Activated CD4-positive, alpha-beta T cell treated with anti-CD3 and anti-CD28 coated beads, Interleukin-2, amount 10 ng/mL, durations not matched to agents 7 days and 5 days (primary cell): ENCODE measurements at regions of chr14 and their contacts with region 1.

Region 1: GRCh38 chr14:106681568-106681967 is 1155.2 kb downstream of the TMEM121 start:
- DNase-seq: no peak
- H3K4me3 Mint-ChIP-seq: no peak overlapping the region
- H3K27ac Mint-ChIP-seq: no peak overlapping the region
- H3K4me1 Mint-ChIP-seq: no peaks in the 10 kb centered on the region
- H3K27me3 Mint-ChIP-seq: peaks cover 53% of the 10 kb centered on the region

Region 2: DNA sequence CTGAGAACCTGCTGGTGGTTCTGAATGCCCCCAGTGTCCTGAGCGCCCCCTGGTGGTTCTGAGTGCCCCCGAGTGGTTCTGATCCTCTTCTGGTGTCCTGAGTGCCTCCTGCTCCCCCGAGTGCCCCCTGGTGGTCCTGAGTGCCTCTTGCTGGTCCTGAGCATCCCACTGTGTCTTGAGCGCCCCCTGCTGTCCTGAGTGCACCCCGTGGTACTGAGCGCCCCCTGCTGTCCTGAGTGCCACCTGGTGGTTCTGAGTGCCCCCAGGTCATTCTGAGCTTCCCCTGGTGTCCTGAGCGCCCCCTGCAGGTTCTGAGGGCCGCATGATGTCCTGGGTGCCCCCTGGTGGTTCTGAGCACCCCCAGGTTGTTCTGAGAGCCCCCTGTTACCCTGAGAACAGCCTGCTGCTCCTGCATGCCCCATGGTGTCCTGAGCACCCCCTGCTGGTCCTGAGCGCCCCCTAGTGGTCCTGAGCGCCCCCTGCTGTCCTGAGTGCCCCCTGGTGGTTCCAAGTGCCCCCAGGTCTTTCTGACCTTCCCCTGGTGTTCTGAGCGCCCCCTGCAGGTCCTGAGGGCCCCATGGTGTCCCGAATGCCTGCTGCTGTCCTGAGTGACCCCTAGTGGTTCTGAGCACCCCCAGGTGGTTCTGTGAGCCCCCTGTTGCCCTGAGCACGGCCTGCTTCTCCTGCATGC is 10.2 kb after region 1 on chr14:
- CTCF ChIA-PET with region 1: interaction called, 22 read pairs
- POLR2A ChIA-PET with region 1: no interaction called
- DNase-seq: peak; percentile 62
- H3K4me3 Mint-ChIP-seq: no peak overlapping the region
- H3K27ac Mint-ChIP-seq: no peak overlapping the region
- H3K4me1 Mint-ChIP-seq: peaks cover 20% of the 10 kb centered on the region
- H3K27me3 Mint-ChIP-seq: peaks cover 13% of the 10 kb centered on the region